Dorsolateral prefrontal cortex (tissue), 120 donors: ENCODE measurements at regions of chr20 and their contacts with region 1.

Region 1: DNA sequence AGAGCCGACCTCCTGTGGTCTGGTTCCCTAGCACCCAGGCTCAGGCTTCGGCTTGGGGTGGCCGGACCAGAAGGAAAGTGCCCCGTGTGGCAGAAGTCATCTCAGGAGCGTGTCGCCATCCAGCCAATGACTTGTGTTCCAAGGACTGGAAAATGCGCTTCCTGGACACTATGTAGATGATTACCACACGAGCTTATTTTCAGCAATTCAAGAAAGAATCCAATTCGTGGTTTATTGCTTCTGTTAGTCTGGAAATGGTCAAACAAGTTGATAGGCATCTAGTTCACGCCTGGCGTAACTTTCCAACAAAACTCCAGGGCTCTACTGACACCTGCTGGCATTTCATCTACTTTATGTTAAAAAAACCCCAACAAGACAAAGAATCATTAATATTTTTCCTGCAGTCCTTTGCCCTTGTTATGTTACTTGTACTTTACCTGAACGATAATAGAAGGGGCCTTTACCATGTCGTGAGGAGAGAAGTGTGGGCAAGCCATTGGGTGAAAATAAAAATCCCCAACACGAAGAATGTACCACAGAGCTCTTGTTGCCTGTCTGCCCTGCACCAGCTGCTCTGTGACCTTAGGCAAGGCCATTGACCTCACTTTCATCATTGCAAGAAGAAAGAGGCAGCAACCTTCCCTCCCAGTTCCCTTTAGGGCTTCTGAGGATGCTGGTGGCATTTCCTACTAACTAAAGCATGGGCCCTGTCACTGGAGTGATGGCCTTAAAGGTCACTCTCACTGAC is 154.7 kb upstream of the LAMP5 start:
- DNase-seq: peak in 1 of 10 donors; percentile 44
- H3K4me3 ChIP-seq: no peak overlapping the region
- H3K27ac ChIP-seq: no peak overlapping the region
- H3K27me3 ChIP-seq: no peaks in the 10 kb centered on the region
- CTCF ChIP-seq: peak in 55 of 56 donors; percentile 26 to 85 (median 59)

Region 2: GRCh38 chr20:8788831-8789230 is 570.9 kb before region 1 on chr20:
- intact Hi-C with region 1: loop called in 1 of 2 experiments (anchors 5 kb)
- DNase-seq: no peak
- H3K4me3 ChIP-seq: no peak overlapping the region
- H3K27ac ChIP-seq: no peak overlapping the region
- H3K27me3 ChIP-seq: no peaks in the 10 kb centered on the region
- CTCF ChIP-seq: no peak

Region 3: GRCh38 chr20:8853805-8854338 is 505.9 kb before region 1 on chr20:
- intact Hi-C with region 1: loop called (anchors 5 to 10 kb)
- DNase-seq: peak in 2 of 10 donors; percentile 20 to 39
- H3K4me3 ChIP-seq: peak overlapping the region in 14 of 59 donors; percentile 2 to 39 (median 25)
- H3K27ac ChIP-seq: peak overlapping the region in 19 of 59 donors; percentile 2 to 61 (median 35)
- H3K27me3 ChIP-seq: peaks cover 0 to 9% (median 0%) of the 10 kb centered on the region in 45 donors
- CTCF ChIP-seq: peak; percentile 77 to 94 (median 89)